ENCODE measurements at regions of chr7 and their contacts with region 1.

Region 1: GRCh38 chr7:6558837-6559236 is 7.6 kb upstream of the GRID2IP start:
- DNase-seq: peak; percentile 62
- H3K27ac ChIP-seq: no peak overlapping the region
- CTCF ChIP-seq: peak; percentile 29; the same call in 1 of the 2 replicates

Region 2: DNA sequence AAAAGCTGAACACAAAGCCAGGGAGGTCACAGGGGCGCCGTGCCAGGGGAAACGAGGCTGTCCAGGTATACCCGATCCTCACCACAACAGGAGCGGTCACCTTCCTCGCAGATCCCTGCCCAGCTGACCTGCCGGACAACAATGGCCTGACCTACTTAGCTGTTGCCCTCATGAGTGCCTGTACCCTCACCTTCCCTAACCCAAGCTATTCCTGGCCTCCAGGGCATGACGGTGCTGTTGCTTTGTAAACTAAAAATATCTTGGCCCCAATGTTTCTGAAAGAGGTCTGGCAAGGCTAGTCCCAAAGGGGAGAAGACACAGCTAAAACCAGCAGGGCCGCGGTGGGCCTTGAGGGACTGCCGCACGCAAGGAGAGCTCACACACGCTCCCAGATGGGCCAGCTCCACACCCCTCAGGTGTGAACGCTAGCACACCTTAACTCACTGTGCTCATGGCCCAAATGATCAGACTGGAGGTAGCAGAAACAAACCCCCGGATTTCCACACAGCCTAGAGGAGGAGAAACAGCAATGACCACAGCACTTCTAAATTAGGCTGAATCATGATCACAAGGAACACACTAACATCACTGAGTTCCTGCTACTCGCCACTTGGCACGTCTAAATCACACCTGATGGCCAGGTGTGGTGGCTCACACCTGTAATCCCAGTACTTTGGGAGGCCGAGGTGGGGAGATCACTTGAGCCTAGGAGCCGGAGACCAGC is 220.1 kb before region 1 on chr7:
- CTCF ChIA-PET with region 1: no interaction called
- POLR2A ChIA-PET with region 1: no interaction called
- DNase-seq: no peak
- H3K27ac ChIP-seq: peak overlapping the region; percentile 25
- CTCF ChIP-seq: no peak

Region 3: GRCh38 chr7:6526997-6527378 is 31.8 kb before region 1 on chr7:
- CTCF ChIA-PET with region 1: interaction called, 11 read pairs
- POLR2A ChIA-PET with region 1: no interaction called
- DNase-seq: no peak
- H3K27ac ChIP-seq: no peak overlapping the region
- CTCF ChIP-seq: no peak

Region 4: GRCh38 chr7:6614953-6615722 is 56.3 kb after region 1 on chr7 and contains the start of gene ZNF853:
- CTCF ChIA-PET with region 1: no interaction called
- POLR2A ChIA-PET with region 1: no interaction called
- DNase-seq: no peak
- H3K27ac ChIP-seq: no peak within 1 kb of the TSS
- CTCF ChIP-seq: no peak